ENCODE measurements at regions of chr7 and their contacts with region 1.

Region 1: GRCh38 chr7:35906191-35906908 is 105.5 kb downstream of the SEPTIN7 start:
- DNase-seq: peak; percentile 56 to 78 (median 62)
- ATAC-seq: peak; percentile 86
- H3K4me3 ChIP-seq: no peak overlapping the region
- H3K27ac ChIP-seq: no peak overlapping the region
- H3K4me1 ChIP-seq: no peaks in the 10 kb centered on the region
- H3K27me3 ChIP-seq: no peaks in the 10 kb centered on the region
- CTCF ChIP-seq: peak; percentile 88 to 96 (median 93)
- POLR2A ChIP-seq: no peak

Region 2: DNA sequence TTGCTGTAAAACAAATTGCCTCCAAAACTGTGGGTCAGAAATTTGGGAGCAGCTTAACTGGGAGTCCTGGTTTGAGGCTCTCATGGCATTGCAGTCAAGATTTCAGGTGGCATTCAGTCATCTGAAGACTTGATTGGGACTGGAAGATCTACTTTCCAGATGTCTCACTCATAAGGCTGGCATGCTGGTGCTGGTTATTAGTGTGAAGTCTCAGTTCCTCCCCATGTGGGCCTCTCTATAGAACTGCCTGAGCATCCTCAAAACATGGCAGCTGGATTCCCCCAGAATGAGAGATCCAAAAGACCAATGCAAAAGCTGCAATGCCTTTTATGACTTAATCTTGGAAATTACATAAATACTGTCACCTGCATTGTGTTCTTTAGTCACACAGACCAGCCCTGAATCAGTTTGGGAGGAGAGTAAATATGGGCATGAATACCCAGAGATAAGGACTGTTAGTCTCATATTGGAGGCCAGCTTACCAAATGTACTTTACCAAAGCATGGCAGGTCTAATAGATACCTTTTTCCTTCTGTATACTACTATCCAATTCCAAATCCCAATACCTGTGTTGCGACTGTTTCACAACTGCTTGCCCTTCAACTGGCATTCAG is 205.0 kb before region 1 on chr7:
- intact Hi-C with region 1: loop called (anchors 10 kb)
- DNase-seq: no peak
- ATAC-seq: no peak
- H3K4me3 ChIP-seq: no peak overlapping the region
- H3K27ac ChIP-seq: no peak overlapping the region
- H3K4me1 ChIP-seq: peaks cover under 1% of the 10 kb centered on the region
- H3K27me3 ChIP-seq: no peaks in the 10 kb centered on the region
- CTCF ChIP-seq: no peak
- POLR2A ChIP-seq: no peak

Region 3: GRCh38 chr7:35716038-35716803 is 190.1 kb before region 1 on chr7:
- intact Hi-C with region 1: no loop called
- DNase-seq: peak; percentile 47 to 76 (median 48)
- ATAC-seq: peak; percentile 72
- H3K4me3 ChIP-seq: no peak overlapping the region
- H3K27ac ChIP-seq: peak overlapping the region in 3 of 4 donors; percentile 1 to 54 (median 1)
- H3K4me1 ChIP-seq: peaks cover 19% of the 10 kb centered on the region
- H3K27me3 ChIP-seq: no peaks in the 10 kb centered on the region
- CTCF ChIP-seq: no peak
- POLR2A ChIP-seq: no peak